WTC11 (cell line): ENCODE measurements at regions of chr20 and their contacts with region 1.

Region 1: GRCh38 chr20:44598423-44599305 is 16.3 kb downstream of the PKIG start:
- DNase-seq: no peak
- ATAC-seq: peak; percentile 58
- H3K4me3 Mint-ChIP-seq: no peak overlapping the region
- H3K27ac Mint-ChIP-seq: 0 out of 2 replicates have a peak overlapping the region, but pooled peaks have one; percentile 12
- H3K4me1 Mint-ChIP-seq: peaks cover 34% of the 10 kb centered on the region
- H3K27me3 Mint-ChIP-seq: no peaks in the 10 kb centered on the region
- CTCF ChIP-seq: no peak

Region 2: GRCh38 chr20:44521484-44522481 is 76.9 kb before region 1 on chr20 and contains the start of gene SERINC3:
- CTCF ChIA-PET with region 1: interaction called, 10 read pairs
- POLR2A ChIA-PET with region 1: no interaction called
- DNase-seq: peak; percentile 90
- ATAC-seq: peak; percentile 96
- H3K4me3 Mint-ChIP-seq: peak within 1 kb of the TSS; percentile 84
- H3K27ac Mint-ChIP-seq: peak within 1 kb of the TSS; percentile 90
- H3K4me1 Mint-ChIP-seq: peaks cover 47% of the 10 kb centered on the region
- H3K27me3 Mint-ChIP-seq: no peaks in the 10 kb centered on the region
- CTCF ChIP-seq: no peak
- total RNA-seq, gene SERINC3: 38.2 to 41.3 TPM (median 38.6 TPM) in 3 replicates

Region 3: DNA sequence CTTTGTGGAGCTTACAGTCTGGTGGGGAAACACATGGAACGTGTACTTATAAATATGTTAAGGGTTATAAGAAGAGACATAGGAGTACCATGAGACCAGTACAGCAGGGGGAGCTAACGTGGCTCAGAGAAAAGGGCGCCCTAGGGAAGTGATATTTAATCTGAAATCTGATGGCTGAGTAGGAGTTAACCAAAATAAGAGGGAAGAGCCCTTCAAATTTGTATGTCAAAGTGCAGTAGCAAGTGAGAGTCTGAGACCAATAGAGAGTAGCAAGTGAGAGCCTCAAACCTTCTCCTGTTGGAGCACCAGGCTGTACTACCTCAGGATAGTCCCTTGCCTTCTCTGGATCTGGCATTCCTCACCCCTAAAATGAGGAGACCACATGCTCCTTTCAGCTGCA is 22.4 kb before region 1 on chr20:
- CTCF ChIA-PET with region 1: interaction called, 13 read pairs
- POLR2A ChIA-PET with region 1: no interaction called
- DNase-seq: no peak
- ATAC-seq: peak; percentile 41; the same call in 1 of the 2 replicates
- H3K4me3 Mint-ChIP-seq: no peak overlapping the region
- H3K27ac Mint-ChIP-seq: no peak overlapping the region
- H3K4me1 Mint-ChIP-seq: no peaks in the 10 kb centered on the region
- H3K27me3 Mint-ChIP-seq: no peaks in the 10 kb centered on the region
- CTCF ChIP-seq: no peak

Region 4: GRCh38 chr20:44609511-44610312 is 11.0 kb after region 1 on chr20:
- CTCF ChIA-PET with region 1: interaction called, 15 read pairs
- POLR2A ChIA-PET with region 1: no interaction called
- DNase-seq: peak; percentile 95
- ATAC-seq: peak; percentile 97
- H3K4me3 Mint-ChIP-seq: peak overlapping the region; percentile 37; the same call in 1 of the 2 replicates
- H3K27ac Mint-ChIP-seq: peak overlapping the region; percentile 81
- H3K4me1 Mint-ChIP-seq: peaks cover 11% of the 10 kb centered on the region
- H3K27me3 Mint-ChIP-seq: peaks cover 10% of the 10 kb centered on the region
- CTCF ChIP-seq: peak; percentile 88